ENCODE measurements at regions of chr9 and their contacts with region 1.

Region 1: DNA sequence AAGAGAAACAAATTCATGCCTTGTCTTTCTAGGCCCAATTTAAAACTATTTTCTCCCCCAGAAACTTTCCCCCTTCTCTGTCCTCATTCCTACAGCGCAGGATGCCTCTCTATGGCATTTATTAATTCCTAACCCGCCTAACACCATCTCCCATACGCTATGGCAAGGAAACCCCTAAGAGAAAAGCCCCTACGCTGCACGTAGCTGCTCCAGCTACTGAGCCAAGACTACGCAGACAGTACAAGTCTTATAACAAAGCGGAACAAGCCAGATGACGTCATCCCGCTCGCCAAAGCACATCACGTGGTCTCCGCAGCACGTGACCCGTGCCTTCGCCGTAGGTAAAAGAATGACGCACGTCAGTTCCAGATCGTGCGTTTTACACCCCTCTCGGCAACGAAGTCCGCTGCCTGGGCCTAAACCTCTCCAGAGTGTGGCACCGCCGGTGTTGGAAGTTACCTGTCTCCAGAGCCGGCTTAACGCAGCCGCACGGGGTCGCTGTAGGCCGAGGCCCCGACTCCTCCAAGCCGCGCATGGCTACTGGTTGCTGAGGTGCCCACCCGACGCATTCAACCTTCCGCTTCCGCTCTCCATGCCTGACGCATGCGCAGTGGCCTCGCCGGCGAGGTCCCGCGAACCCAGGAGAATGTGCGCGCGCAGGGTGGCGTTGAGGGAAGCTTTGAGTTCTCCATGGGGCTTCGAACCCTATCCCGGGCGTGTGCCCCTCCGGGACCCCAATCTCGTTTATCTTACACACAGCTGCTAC is at the start of gene TRMO:
- DNase-seq: peak; percentile 99
- ATAC-seq: peak; percentile 79
- H3K4me3 Mint-ChIP-seq: peak within 1 kb of the TSS; percentile 82
- H3K27ac Mint-ChIP-seq: peak within 1 kb of the TSS; percentile 95
- H3K4me1 Mint-ChIP-seq: peaks cover 39% of the 10 kb centered on the region
- H3K27me3 Mint-ChIP-seq: peaks cover 2% of the 10 kb centered on the region
- CTCF ChIP-seq: peak; percentile 63
- total RNA-seq, gene TRMO: 12.6 to 13.3 TPM

Region 2: GRCh38 chr9:97890038-97890437 is 32.1 kb before region 1 on chr9:
- CTCF ChIA-PET with region 1: interaction called, 9 read pairs
- POLR2A ChIA-PET with region 1: interaction called, 10 read pairs
- intact Hi-C with region 1: no loop called
- DNase-seq: peak; percentile 82
- ATAC-seq: peak; percentile 87
- H3K4me3 Mint-ChIP-seq: no peak overlapping the region
- H3K27ac Mint-ChIP-seq: no peak overlapping the region
- H3K4me1 Mint-ChIP-seq: peaks cover 5% of the 10 kb centered on the region
- H3K27me3 Mint-ChIP-seq: no peaks in the 10 kb centered on the region
- CTCF ChIP-seq: peak; percentile 95

Region 3: GRCh38 chr9:97938081-97938644 is 16.0 kb after region 1 on chr9 and contains the start of gene HEMGN:
- CTCF ChIA-PET with region 1: interaction called, 35 read pairs
- POLR2A ChIA-PET with region 1: interaction called, 16 read pairs
- intact Hi-C with region 1: no loop called
- DNase-seq: peak; percentile 53
- ATAC-seq: peak; percentile 81
- H3K4me3 Mint-ChIP-seq: peak within 1 kb of the TSS; percentile 46
- H3K27ac Mint-ChIP-seq: peak within 1 kb of the TSS; percentile 83
- H3K4me1 Mint-ChIP-seq: peaks cover 34% of the 10 kb centered on the region
- H3K27me3 Mint-ChIP-seq: no peaks in the 10 kb centered on the region
- CTCF ChIP-seq: no peak
- total RNA-seq, gene HEMGN: 1.2 to 1.4 TPM

Region 4: DNA sequence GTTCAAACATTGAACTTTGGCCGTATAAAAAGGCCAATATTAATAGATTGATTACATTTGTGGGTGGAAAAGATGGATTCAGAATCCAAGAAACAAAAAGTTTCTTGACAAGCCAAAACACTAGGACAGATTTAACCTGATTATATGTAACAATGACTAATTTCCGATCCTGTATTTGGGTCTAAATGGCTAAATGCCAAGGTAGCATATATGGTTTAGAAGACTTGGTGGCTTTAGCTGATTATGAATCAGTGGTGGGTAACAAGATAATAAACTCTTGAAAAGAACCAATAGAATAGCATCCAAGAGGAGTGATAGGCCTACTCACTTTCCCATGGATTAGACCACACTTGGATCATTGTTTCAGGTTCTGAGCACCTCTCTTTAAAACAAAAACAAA is 39.2 kb after region 1 on chr9:
- CTCF ChIA-PET with region 1: interaction called, 76 read pairs
- POLR2A ChIA-PET with region 1: interaction called, 15 read pairs
- intact Hi-C with region 1: no loop called
- DNase-seq: no peak
- ATAC-seq: no peak
- H3K4me3 Mint-ChIP-seq: no peak overlapping the region
- H3K27ac Mint-ChIP-seq: no peak overlapping the region
- H3K4me1 Mint-ChIP-seq: peaks cover 4% of the 10 kb centered on the region
- H3K27me3 Mint-ChIP-seq: peaks cover 1% of the 10 kb centered on the region
- CTCF ChIP-seq: no peak

Region 5: DNA sequence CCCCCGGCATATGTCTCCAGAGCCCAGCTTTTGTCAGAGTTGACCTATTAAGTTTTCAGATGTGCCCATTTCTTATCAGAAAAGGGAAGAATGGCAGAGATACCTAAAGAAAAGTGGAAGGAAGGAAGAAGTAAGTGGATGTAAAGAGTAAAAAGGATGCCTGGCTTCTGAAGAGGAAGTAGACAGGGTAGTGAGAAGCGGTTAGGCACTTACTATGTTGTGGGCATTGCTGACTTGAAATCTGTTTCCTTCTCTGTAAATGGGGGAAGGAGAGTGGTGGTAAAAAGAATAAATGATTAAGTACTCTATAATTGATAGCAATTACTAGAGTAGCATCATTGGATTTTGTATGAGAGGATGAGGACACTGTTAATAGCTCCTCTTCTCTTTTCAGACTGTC is 70.9 kb after region 1 on chr9:
- CTCF ChIA-PET with region 1: interaction called, 74 read pairs
- POLR2A ChIA-PET with region 1: interaction called, 3 read pairs
- intact Hi-C with region 1: no loop called
- DNase-seq: no peak
- ATAC-seq: peak; percentile 66
- H3K4me3 Mint-ChIP-seq: peak overlapping the region; percentile 11
- H3K27ac Mint-ChIP-seq: peak overlapping the region; percentile 80
- H3K4me1 Mint-ChIP-seq: peaks cover 84% of the 10 kb centered on the region
- H3K27me3 Mint-ChIP-seq: no peaks in the 10 kb centered on the region
- CTCF ChIP-seq: no peak

Region 6: GRCh38 chr9:98045234-98046179 is 123.4 kb after region 1 on chr9:
- CTCF ChIA-PET with region 1: interaction called, 34 read pairs
- POLR2A ChIA-PET with region 1: interaction called, 5 read pairs
- intact Hi-C with region 1: no loop called
- DNase-seq: peak; percentile 52
- ATAC-seq: peak; percentile 93
- H3K4me3 Mint-ChIP-seq: peak overlapping the region; percentile 86
- H3K27ac Mint-ChIP-seq: peak overlapping the region; percentile 94
- H3K4me1 Mint-ChIP-seq: peaks cover 36% of the 10 kb centered on the region
- H3K27me3 Mint-ChIP-seq: no peaks in the 10 kb centered on the region
- CTCF ChIP-seq: peak; percentile 35